HepG2 (cell line): ENCODE measurements at regions of chr5 and their contacts with region 1.

Region 1: DNA sequence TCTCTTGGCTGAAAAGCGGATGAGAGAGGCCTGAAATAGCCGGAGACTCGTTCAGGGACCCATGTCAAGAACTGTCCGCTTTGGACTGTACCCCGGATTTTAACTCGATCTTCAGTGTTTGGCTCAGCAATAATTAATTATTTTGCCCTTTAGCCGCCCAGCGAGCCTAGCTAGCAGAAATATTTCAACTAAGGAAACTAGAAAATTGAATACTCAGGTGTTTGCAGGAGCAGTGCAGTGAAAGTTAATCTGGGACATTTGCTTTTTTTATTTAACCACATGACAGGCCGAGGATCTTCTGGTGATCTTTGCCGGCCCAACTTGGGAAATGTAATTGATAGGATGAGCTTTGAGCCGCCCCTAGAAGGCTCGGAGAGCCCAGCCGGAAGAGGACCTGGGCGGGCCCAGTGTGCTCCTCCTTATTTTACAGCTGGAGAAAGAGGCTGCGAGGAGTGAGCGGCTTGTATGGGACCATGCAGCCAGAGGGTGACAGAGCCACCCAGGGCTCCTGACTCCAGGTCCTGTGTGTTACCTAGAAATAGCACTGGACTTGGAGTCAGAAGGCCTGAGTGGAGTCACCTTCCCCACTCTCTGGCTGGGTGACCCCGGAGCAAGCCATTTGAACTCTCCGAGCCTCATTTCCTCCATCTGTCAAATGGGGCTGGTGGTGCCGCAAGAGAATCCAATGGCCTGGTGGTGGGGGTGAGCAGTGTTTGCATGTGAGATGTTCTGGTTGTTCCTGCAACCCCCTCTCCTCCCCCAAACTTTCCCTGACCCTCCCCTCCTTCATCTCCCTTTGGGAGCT is 2.4 kb downstream of the PPARGC1B start:
- DNase-seq: peak; percentile 32
- ATAC-seq: peak; percentile 56
- H3K4me3 ChIP-seq: peak overlapping the region; percentile 63 to 78 (median 71)
- H3K27ac ChIP-seq: no peak overlapping the region
- H3K4me1 ChIP-seq: peaks cover 29% of the 10 kb centered on the region
- H3K27me3 ChIP-seq: peaks cover 1 to 18% of the 10 kb centered on the region in 2 experiments; a peak in 4 of 5 replicates
- CTCF ChIP-seq: no peak
- EP300 ChIP-seq: no peak
- POLR2A ChIP-seq: no peak
- RAD21 ChIP-seq: no peak

Region 2: GRCh38 chr5:149757956-149758355 is 25.4 kb after region 1 on chr5:
- CTCF ChIA-PET with region 1: no interaction called
- POLR2A ChIA-PET with region 1: interaction called, 4 read pairs
- in situ Hi-C with region 1: no loop called
- intact Hi-C with region 1: loop called (anchors 1 kb)
- DNase-seq: no peak
- ATAC-seq: no peak
- H3K4me3 ChIP-seq: no peak overlapping the region
- H3K27ac ChIP-seq: no peak overlapping the region
- H3K4me1 ChIP-seq: peaks cover 8% of the 10 kb centered on the region; the same call in 1 of the 2 replicates
- H3K27me3 ChIP-seq: no peaks in the 10 kb centered on the region
- CTCF ChIP-seq: no peak
- EP300 ChIP-seq: no peak
- POLR2A ChIP-seq: no peak
- RAD21 ChIP-seq: no peak